Aorta (tissue), 5 donors: ENCODE measurements at regions of chr1 and their contacts with region 1.

Region 1: GRCh38 chr1:14977297-14977931 is 176.1 kb upstream of the TMEM51 start:
- DNase-seq: no peak
- ATAC-seq: no peak
- H3K4me3 ChIP-seq: no peak overlapping the region
- H3K27ac ChIP-seq: no peak overlapping the region
- H3K4me1 ChIP-seq: no peaks in the 10 kb centered on the region
- H3K27me3 ChIP-seq: no peaks in the 10 kb centered on the region

Region 2: DNA sequence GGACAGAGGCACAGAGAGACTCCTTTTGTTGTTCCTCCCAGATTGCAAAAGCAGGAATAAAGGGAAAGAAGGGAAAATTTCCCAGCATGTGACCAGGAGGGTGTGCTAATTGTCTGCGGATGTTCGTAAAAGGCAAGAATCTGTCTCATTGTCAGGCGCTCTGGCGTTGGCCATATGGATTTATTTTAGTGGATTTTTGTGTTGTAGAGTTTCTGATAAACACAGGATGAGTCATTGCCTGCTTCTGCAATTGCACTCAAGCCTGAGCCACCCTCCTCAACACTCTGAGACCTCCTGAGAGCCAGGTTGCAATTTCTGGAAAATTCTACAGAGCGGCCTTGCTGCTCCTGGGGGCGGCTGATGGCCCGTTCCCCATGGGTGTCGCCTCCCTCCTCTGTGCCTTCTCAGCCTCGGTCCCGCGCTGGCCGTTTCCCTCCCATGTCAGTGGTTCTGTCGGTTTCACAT is 151.2 kb before region 1 on chr1:
- intact Hi-C with region 1: no loop called
- DNase-seq: no peak
- ATAC-seq: peak; percentile 15
- H3K4me3 ChIP-seq: no peak overlapping the region
- H3K27ac ChIP-seq: no peak overlapping the region
- H3K4me1 ChIP-seq: no peaks in the 10 kb centered on the region
- H3K27me3 ChIP-seq: no peaks in the 10 kb centered on the region

Region 3: GRCh38 chr1:14899581-14900085 is 77.8 kb before region 1 on chr1:
- intact Hi-C with region 1: no loop called
- DNase-seq: no peak
- ATAC-seq: no peak
- H3K4me3 ChIP-seq: no peak overlapping the region
- H3K27ac ChIP-seq: no peak overlapping the region
- H3K4me1 ChIP-seq: no peaks in the 10 kb centered on the region
- H3K27me3 ChIP-seq: no peaks in the 10 kb centered on the region

Region 4: GRCh38 chr1:14939527-14940284 is 37.7 kb before region 1 on chr1:
- intact Hi-C with region 1: loop called in 1 of 2 experiments (anchors 5 kb)
- DNase-seq: no peak
- ATAC-seq: no peak
- H3K4me3 ChIP-seq: no peak overlapping the region
- H3K27ac ChIP-seq: no peak overlapping the region
- H3K4me1 ChIP-seq: no peaks in the 10 kb centered on the region
- H3K27me3 ChIP-seq: no peaks in the 10 kb centered on the region